Heart left ventricle (tissue), 16 donors: ENCODE measurements at regions of chr3 and their contacts with region 1.

Region 1: DNA sequence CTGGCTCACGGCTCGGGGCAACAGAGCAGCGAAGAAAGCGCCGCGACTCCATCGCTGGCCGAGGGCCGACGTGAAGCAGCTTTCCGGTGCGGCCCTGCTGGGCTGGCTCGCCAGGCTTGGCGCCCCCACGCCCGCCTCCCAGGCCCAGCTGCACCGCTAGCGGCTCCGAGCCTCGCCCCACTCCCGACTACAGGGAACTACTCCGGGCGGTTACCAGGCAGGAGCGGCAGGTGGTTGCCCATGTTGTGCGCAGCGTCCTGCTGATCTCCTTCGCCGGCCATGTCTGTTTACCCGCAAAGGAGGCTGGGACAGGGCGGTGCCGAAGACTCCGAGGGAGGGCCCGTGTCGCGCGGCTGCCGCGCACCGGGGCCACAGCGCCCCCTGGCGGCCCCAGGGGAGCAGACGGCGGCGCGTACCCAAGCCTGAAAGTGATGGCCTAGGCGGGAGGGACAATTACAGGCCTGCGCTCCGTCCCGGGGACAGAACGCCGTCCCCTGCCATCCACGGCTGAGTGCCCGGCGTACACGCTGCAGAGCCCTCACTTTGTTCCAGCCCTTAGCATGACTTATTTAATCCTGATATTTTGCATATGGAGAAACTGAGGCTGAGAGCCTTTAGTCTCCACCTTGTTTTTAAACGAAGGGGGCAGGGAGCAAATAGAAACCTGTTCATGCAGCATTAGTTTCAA is at the start of gene CRBN:
- DNase-seq: peak; percentile 87 to 93 (median 90)
- ATAC-seq: peak; percentile 97 to 100 (median 98)
- H3K4me3 ChIP-seq: peak within 1 kb of the TSS; percentile 68 to 100 (median 93)
- H3K27ac ChIP-seq: peak within 1 kb of the TSS; percentile 53 to 89 (median 77)
- H3K4me1 ChIP-seq: peaks cover 8 to 43% (median 31%) of the 10 kb centered on the region in 12 donors
- H3K27me3 ChIP-seq: no peaks in the 10 kb centered on the region
- CTCF ChIP-seq: peak; percentile 94 to 100 (median 98)
- POLR2A ChIP-seq: peak in 1 of 2 donors; percentile 61
- total RNA-seq, gene CRBN: 35.9 to 64.7 (median 56.0) TPM

Region 2: DNA sequence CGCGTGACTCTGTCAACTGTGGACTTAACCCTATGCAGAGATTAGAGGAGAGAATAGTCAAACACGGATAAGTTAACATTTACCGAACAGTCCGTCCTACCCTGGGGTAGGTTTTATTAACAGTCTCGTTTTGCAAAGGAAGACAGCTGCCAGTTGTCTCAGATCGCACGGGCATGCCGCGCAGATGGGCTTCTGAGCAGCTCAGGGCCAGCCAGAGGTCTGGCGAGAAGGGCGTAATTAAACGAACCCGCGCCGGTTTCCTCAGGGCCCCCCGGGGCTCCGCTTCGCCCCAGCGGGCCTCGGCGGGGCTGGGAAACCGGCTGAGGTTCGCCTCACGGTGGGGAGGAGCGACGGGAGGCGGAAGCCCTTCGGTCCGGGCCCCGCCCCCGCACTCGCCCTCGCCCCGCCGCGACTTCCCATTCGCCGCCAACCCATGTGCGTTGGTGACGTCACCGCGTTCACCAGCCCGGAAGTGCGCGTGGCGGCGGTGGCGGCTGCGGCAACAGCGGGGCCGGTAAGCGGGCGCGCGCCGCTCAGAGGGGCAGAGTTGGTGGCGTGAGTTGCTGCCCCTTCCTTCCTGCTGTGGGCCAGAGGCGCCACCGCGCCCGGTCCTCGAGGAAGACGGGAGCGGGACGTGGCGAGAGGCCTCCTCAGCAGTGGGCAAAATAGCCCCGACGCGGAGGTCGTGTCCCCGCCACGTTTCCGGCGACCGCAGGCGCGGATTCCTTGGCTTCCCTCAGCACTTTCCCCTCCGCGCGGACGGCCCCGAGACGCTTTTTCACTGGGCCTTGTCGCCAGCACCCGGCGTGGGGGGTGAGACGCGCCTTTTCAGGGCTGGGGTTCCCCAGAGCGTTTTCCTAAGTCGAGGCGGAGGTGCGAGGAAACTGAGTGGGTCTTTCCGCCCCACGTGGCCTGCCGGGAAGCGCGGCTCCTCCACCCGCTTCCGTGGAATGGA is 52.8 kb before region 1 on chr3 and contains the start of gene TRNT1:
- intact Hi-C with region 1: loop called in 6 of 10 experiments (anchors 2 to 5 kb)
- DNase-seq: peak; percentile 97 to 99 (median 97)
- ATAC-seq: peak; percentile 98 to 99 (median 99)
- H3K4me3 ChIP-seq: peak within 1 kb of the TSS; percentile 47 to 98 (median 88)
- H3K27ac ChIP-seq: peak within 1 kb of the TSS; percentile 2 to 98 (median 92)
- H3K4me1 ChIP-seq: peaks cover 0 to 34% (median 15%) of the 10 kb centered on the region in 12 donors
- H3K27me3 ChIP-seq: no peaks in the 10 kb centered on the region
- CTCF ChIP-seq: peak in 2 of 12 donors; percentile 7 to 10
- POLR2A ChIP-seq: peak in 1 of 2 donors; percentile 86
- total RNA-seq, gene TRNT1: 5.4 to 14.7 (median 11.1) TPM

Region 3: DNA sequence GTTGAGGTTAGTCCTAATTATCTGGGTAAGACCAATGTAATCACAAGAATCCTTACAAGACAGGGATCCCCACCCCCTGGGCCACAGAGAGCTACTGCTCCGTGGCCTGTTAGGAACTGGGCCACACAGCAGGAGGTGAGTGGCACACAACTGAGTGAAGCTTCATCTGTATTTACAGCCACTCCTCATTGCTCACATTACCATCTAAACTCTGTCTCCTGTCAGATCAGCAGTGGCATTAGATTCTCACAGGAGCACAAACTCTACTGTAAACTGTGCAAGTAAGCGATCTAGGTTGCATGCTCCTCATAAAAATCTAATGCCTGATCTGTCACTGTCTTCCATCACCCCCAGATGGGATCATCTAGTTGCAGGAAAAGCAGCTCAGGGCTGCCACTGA is 58.4 kb after region 1 on chr3:
- intact Hi-C with region 1: loop called in 1 of 10 experiments (anchors 10 kb)
- DNase-seq: no peak
- ATAC-seq: no peak
- H3K4me3 ChIP-seq: no peak overlapping the region
- H3K27ac ChIP-seq: no peak overlapping the region
- H3K4me1 ChIP-seq: no peaks in the 10 kb centered on the region
- H3K27me3 ChIP-seq: no peaks in the 10 kb centered on the region
- CTCF ChIP-seq: no peak
- POLR2A ChIP-seq: no peak